Activated CD8-positive, alpha-beta T cell treated with anti-CD3 and anti-CD28 coated beads for 36 hours (primary cell): ENCODE measurements at regions of chr22 and their contacts with region 1.

Region 1: DNA sequence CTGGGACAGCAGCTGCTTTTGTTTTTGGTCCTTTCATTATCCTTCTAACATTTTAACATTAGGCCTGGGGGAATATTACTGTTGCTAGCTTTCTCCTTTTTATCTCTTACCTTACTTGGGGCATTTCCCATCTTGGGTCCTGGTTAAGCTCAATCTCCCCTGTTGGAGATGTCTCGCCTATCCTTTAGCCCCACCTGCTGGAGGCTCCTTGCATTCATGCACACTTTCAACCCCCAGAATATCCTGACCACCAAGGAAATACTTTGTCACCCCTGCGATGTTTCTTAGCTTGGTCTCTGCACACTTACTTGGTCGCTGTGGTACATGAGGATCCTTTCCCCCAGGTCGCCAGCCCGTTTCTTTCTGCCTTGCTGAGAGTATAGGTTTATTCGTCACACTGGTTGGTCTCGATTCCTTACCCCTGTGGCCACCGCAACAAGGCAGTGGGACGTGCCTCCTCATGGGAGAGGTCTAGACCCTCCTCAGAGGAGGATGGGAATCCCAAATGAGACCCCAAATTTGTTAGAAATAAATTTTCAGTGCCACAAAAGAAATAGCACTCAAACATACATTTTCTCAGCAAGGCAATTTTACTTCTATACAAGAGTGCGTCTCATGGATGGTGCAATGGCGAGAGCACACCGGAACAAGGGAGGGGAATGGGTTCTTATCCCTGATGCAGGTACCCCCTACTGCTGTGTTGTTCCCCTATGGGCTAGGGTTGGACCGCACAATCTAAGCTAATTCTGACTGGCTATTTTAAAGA is 5.4 kb upstream of the TXN2 start:
- DNase-seq: peak; percentile 80
- ATAC-seq: no peak
- H3K4me3 Mint-ChIP-seq: no peak overlapping the region
- H3K27ac Mint-ChIP-seq: no peak overlapping the region
- H3K4me1 Mint-ChIP-seq: peaks cover 8% of the 10 kb centered on the region
- H3K27me3 Mint-ChIP-seq: no peaks in the 10 kb centered on the region
- CTCF ChIP-seq: peak; percentile 69

Region 2: GRCh38 chr22:36286471-36287224 is 200.2 kb before region 1 on chr22:
- CTCF ChIA-PET with region 1: interaction called, 19 read pairs
- POLR2A ChIA-PET with region 1: interaction called, 3 read pairs
- intact Hi-C with region 1: no loop called
- DNase-seq: peak; percentile 75
- ATAC-seq: peak; percentile 91
- H3K4me3 Mint-ChIP-seq: no peak overlapping the region
- H3K27ac Mint-ChIP-seq: peak overlapping the region; percentile 44
- H3K4me1 Mint-ChIP-seq: peaks cover 18% of the 10 kb centered on the region
- H3K27me3 Mint-ChIP-seq: no peaks in the 10 kb centered on the region
- CTCF ChIP-seq: peak; percentile 72

Region 3: DNA sequence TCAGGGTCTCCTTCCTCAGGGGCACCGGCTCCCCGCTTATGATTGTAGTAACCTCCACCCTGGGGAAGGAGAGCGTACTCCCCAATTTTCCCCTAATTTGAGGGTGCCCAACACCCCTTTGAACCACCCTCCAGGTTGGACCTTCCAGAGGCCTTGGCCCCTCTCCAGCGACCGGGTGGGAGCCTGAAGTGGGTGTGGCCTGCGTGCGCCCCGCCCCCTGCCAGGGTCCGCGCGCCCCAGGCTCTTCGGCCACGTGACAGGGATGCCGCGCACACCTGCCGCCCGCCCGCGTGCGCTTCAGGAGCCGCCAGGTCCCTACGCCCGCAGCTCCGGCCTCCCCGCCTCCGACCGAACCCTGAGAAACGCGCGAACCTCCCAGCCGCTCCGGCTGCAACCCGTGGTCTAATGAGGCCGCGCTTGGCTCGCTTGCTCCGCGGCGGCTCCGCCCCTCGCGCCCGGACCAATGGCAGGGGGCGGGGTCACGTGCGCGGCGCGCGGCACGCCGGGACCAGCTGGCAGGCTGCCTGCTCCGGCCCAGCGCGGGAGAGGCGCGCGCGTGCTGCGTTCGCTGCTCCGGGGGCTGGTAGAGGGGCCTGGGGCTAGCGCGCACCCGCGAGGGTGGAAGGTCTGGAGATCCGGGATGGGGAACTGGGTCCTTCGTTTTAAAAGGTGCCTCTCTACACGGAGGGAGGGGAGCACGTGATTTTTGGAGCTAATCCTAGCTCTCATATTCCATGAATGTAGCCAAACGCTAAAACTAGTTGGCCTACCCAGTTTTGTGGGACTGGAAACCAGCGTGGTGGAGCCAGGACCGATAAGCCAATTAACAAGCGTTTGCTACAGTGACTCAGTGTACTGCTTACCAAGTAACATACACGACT is 20.1 kb after region 1 on chr22 and contains the start of gene FOXRED2:
- CTCF ChIA-PET with region 1: interaction called, 13 read pairs
- POLR2A ChIA-PET with region 1: interaction called, 6 read pairs
- intact Hi-C with region 1: no loop called
- DNase-seq: peak; percentile 90
- ATAC-seq: peak; percentile 94
- H3K4me3 Mint-ChIP-seq: peak within 1 kb of the TSS; percentile 53
- H3K27ac Mint-ChIP-seq: peak within 1 kb of the TSS; percentile 74
- H3K4me1 Mint-ChIP-seq: peaks cover 20% of the 10 kb centered on the region
- H3K27me3 Mint-ChIP-seq: no peaks in the 10 kb centered on the region
- CTCF ChIP-seq: no peak
- total RNA-seq, gene FOXRED2: 16.7 to 17.5 TPM

Region 4: DNA sequence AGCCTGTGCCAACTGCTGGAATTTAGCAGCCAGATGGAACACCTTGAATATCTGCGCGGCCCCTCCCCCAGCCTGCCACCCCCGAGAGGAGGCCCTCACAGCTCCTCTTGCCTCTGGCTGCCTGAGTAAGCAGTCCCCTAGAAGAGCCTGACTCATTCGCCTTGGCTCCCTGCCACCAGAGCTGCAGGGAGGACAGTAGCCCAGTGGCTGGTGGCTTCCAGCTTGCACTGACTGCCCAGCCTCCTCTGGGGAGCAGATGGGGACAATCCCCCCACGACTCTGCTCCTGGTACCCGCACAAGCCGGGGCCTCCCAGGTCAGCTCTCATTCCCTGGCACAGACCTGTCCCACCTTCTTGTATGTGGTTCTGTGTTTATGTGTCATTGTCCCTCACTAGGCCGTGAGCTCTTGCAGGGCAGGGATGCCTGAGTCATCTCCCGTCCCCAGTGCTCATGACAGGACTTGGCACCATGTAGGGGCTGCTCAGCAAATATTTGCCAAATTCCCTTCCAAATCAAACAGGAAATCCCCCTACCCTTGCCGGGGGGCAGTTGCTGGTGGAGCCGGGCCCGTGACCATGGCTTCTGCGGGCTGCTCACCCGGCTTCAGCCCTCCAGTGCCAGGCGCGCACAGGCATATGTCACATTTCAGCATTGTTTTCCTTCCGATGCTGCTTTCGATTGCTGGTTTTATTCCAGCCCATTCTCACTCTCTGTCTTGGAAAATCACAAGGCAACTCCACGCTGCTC is 173.1 kb after region 1 on chr22:
- CTCF ChIA-PET with region 1: no interaction called
- POLR2A ChIA-PET with region 1: no interaction called
- intact Hi-C with region 1: no loop called
- DNase-seq: peak; percentile 74
- ATAC-seq: peak; percentile 81
- H3K4me3 Mint-ChIP-seq: no peak overlapping the region
- H3K27ac Mint-ChIP-seq: no peak overlapping the region
- H3K4me1 Mint-ChIP-seq: no peaks in the 10 kb centered on the region
- H3K27me3 Mint-ChIP-seq: peaks cover 13% of the 10 kb centered on the region
- CTCF ChIP-seq: no peak

Region 5: GRCh38 chr22:36790648-36791047 is 303.8 kb after region 1 on chr22:
- CTCF ChIA-PET with region 1: no interaction called
- POLR2A ChIA-PET with region 1: no interaction called
- intact Hi-C with region 1: no loop called
- DNase-seq: peak; percentile 68
- ATAC-seq: peak; percentile 99
- H3K4me3 Mint-ChIP-seq: no peak overlapping the region
- H3K27ac Mint-ChIP-seq: no peak overlapping the region
- H3K4me1 Mint-ChIP-seq: peaks cover 4% of the 10 kb centered on the region
- H3K27me3 Mint-ChIP-seq: no peaks in the 10 kb centered on the region
- CTCF ChIP-seq: no peak